ENCODE measurements at regions of chr11 and their contacts with region 1.

Region 1: GRCh38 chr11:44538375-44539054 is 26.9 kb upstream of the CD82 start:
- DNase-seq: peak; percentile 93
- H3K4me3 ChIP-seq: peak overlapping the region in 1 of 8 donors; percentile 27
- H3K27ac ChIP-seq: no peak overlapping the region
- H3K4me1 ChIP-seq: peaks cover 0 to 7% (median 5%) of the 10 kb centered on the region in 6 donors
- H3K27me3 ChIP-seq: peaks cover 0 to 31% (median 0%) of the 10 kb centered on the region in 7 donors
- CTCF ChIP-seq: peak; percentile 84 to 100 (median 98)
- POLR2A ChIP-seq: no peak

Region 2: GRCh38 chr11:44286268-44286880 is 252.1 kb before region 1 on chr11:
- intact Hi-C with region 1: loop called (anchors 5 kb)
- DNase-seq: peak; percentile 87
- H3K4me3 ChIP-seq: no peak overlapping the region
- H3K27ac ChIP-seq: no peak overlapping the region
- H3K4me1 ChIP-seq: no peaks in the 10 kb centered on the region
- H3K27me3 ChIP-seq: peaks cover 0 to 18% (median 0%) of the 10 kb centered on the region in 7 donors
- CTCF ChIP-seq: peak; percentile 82 to 97 (median 94)
- POLR2A ChIP-seq: no peak